Naive thymus-derived CD8-positive, alpha-beta T cell (primary cell): ENCODE measurements at regions of chr2 and their contacts with region 1.

Region 1: DNA sequence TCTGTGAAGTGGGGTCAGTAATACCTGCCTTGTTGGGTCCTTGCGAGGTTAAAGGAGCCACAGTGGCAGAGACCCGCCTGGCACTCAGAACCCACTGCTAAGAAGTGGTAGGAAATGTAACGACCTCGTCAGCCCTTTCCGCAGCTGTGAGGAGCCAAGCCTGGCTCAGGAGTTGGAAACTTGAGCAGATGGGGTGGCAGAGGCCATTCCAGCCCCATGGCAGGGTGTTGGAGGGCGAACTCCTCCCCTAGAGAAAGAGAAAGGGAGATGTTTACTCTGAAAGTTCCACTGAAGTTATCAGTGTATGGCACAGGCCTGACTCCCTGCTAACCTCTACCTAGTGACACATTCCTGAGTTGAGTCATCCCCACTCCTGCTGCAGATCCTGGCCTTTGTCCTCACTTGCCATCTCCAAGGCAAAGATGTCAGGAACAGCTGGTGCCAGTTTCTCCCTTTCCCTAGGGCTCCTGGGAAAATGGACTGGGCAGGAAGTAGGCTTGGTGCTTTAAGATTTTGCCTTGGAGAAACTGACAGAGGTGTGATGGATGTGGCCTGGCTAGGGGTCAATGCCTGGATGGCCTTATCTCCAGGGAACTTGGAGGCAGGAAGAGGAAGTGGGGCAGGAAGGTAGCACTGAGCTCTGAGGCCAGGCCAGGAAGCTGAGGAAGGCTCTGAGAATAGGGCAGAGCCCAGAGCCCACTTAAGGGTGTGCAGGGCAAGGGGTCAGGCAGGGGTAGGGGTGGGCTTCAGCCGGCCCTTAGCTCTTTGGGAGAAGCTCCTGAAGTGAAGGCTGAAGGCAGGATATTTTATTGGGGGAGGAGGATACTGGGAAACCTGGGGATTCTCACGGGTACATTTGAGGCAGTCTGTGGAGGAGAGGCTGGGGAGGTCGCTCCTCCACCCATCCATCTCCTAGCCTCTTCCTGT is 889 bp downstream of the VAMP5 start:
- DNase-seq: peak in 3 of 10 donors; percentile 20 to 42 (median 40)
- ATAC-seq: peak; percentile 55 to 59
- H3K4me3 Mint-ChIP-seq: peak overlapping the region; percentile 80 to 93 (median 89)
- H3K27ac Mint-ChIP-seq: peak overlapping the region; percentile 86 to 97 (median 93)
- H3K4me1 Mint-ChIP-seq: peaks cover 34 to 76% (median 65%) of the 10 kb centered on the region in 4 donors
- H3K27me3 Mint-ChIP-seq: no peaks in the 10 kb centered on the region

Region 2: DNA sequence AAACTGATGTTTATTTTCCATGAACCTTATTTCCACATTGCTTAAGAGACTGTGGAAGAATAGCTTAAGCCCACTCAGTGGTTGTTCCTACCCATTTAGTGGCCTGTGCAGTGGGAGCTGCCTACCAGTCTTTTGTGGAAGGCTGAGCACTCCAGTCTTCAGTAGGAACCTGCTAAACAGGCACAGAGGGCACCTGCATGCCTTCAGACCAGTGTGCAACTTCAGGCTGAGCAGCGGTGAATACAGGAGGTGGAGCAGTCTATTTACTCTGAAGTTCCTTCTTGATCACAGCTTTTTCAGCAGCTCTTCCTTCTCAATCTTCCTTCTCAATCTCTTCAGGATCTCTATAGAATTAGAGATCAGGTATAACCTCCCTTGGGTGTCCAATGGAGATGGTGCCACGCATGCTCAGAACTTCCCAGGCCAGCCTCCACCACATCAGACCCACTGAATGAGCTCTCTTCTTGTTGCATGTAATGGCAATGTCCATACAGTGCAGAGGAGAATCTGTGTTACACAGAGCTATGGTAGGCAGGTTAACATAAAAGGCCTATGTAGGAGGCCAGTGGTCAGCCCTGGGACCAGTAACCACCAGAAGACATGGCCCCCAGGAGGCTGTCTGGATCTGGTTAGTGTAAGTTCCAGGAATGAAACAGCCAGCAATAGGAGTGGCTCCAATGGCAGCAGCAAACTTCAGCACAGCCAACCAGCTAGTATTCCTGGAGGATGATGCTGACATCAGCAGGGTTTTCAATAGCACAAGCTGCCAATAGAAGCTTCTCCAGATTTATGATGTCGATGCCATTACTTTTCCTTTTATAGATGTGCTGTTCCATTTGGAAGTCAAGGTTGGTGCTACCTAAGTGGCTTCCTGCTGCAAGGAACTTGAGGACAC is 94.0 kb before region 1 on chr2:
- POLR2A ChIA-PET with region 1: no interaction called
- DNase-seq: no peak
- ATAC-seq: no peak
- H3K4me3 Mint-ChIP-seq: no peak overlapping the region
- H3K27ac Mint-ChIP-seq: no peak overlapping the region
- H3K4me1 Mint-ChIP-seq: no peaks in the 10 kb centered on the region
- H3K27me3 Mint-ChIP-seq: no peaks in the 10 kb centered on the region

Region 3: DNA sequence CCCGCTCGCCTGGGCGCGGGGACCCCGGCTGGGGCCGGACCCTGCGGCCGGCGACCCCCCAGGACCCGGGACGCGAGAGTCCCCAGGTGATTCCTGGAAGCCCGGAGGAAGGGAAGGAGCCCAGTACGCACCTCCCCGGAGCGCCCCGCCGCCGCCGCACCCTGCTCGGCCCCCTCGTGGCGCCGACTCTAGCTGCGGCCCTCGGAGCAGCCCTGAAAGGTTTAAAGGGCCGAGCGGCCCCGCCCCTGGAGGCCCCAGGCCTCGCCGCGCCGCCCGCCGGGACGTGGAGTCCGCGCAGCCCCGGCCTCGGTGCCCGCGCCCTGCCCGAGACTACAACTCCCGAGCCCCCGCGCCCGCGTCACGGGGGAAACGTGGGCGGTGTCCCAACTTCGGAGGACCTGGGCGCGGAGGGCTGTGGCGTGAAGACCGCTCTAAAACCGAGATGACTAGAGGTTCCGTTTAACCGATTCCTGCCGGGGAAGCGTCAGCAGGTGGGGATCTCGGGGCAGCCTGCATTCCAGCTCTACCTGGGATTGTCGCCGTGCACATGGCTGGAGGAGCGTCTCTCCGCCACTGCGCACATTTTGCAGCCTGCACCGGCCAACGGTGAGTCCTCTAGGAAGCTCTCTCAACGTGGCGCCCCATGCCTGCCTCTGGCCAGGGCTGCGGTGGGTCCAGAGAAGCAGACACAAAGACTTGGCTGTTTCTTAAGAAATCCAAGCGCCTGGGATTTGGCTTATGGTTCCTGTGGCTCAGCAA is 17.5 kb after region 1 on chr2 and contains the start of gene TMEM150A:
- POLR2A ChIA-PET with region 1: interaction called, 88 read pairs
- DNase-seq: peak; percentile 76 to 91 (median 82)
- ATAC-seq: peak; percentile 91 to 92
- H3K4me3 Mint-ChIP-seq: peak within 1 kb of the TSS; percentile 85 to 95 (median 90)
- H3K27ac Mint-ChIP-seq: peak within 1 kb of the TSS; percentile 63 to 94 (median 90)
- H3K4me1 Mint-ChIP-seq: peaks cover 18 to 47% (median 34%) of the 10 kb centered on the region in 4 donors
- H3K27me3 Mint-ChIP-seq: no peaks in the 10 kb centered on the region
- polyA plus RNA-seq, gene TMEM150A: 11.6 to 15.1 (median 13.8) TPM

Region 4: DNA sequence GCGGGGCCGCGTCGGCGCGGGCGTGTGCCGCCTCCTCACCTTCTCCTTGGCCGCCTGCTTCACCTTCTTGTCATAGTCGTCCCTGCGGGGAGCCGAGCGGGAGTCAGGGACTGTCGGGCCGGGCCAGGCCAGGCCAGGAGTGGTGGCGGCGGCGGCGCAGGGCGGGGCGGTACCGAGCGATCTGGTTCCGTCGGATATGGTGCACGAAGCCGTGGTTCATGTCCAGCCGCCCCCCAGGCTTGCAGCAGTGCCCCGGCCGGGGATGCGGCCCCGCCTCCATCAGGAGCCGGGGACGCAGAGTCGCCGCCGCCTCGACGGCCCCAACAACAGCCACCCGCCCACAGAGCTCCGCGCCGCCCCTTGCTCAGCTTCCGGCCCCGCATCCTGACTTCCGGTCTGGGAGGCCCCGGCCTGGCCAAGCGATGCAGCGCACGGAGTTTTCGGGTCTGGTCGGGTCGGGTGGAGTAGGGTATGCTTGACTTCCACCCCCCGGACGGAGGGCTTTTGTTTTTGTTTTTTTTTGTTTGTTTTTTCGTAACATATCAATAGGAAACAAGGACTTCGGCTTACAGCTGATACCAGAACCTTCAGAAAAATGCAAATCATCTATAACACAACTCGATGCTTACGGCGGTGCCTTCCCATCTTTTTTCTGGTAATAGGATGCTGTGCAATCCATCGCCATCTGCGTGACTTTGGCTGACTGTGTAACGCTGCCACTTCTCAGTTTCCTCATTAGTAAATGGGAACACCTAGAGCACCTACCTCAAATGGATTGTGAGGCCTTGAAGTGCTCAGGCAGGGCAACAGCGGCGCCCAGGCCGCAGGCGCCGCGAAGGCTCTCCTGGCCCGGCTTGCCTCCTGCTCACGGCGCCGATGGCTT is 26.8 kb after region 1 on chr2 and contains the start of gene C2orf68:
- POLR2A ChIA-PET with region 1: interaction called, 11 read pairs
- DNase-seq: peak; percentile 65 to 89 (median 77)
- ATAC-seq: peak; percentile 60 to 63
- H3K4me3 Mint-ChIP-seq: peak within 1 kb of the TSS; percentile 91 to 99 (median 98)
- H3K27ac Mint-ChIP-seq: peak within 1 kb of the TSS; percentile 72 to 98 (median 95)
- H3K4me1 Mint-ChIP-seq: peaks cover 12 to 42% (median 32%) of the 10 kb centered on the region in 4 donors
- H3K27me3 Mint-ChIP-seq: no peaks in the 10 kb centered on the region
- polyA plus RNA-seq, gene C2orf68: 15.7 to 21.1 (median 20.4) TPM

Region 5: DNA sequence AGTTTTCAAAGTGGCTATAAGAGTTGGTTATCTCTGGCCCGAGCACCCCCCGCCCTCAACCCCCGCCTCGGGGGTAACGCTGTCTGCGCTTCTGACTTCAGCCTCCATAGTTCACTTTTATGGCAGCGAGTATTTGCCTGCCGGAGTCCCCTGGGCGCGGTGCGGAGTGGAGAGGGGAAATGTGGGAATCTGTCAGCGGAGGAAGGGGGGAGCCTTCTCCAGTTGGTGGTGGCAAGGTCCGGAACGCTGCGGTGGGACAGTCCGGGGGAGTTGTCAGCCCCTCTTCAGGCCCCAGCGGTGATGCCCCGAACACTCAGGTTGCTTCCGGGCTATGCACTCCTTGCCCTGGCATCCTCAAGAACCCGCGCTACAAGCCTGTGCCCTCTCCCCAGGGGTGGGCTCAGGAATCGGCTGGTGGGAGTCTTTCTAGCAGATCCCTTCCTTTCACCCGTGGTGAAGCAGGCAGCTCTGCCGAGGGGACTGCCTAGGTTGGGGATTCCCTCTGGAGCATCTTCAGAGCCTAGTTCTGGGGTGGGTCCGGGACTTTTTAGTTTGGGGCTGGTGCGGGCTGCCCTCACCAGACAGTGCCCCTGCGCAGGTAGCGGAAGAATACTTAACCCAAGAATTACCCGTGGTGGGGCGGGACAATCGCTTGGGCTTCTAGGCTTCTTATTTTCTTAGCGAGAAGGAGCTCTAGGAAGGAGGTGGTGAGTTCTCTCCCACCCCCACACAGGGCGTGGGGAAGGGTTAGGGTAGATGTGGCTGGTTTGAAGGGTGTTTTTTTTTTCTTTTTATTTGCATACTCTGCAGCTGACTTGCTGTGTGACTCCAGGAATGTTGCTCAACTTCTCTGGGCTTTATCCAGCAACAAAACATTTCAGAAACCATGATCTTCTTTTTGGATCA is 170.3 kb after region 1 on chr2:
- POLR2A ChIA-PET with region 1: no interaction called
- DNase-seq: peak in 2 of 10 donors; percentile 4 to 11
- ATAC-seq: peak; percentile 37 to 48
- H3K4me3 Mint-ChIP-seq: peak overlapping the region; percentile 72 to 88 (median 82)
- H3K27ac Mint-ChIP-seq: peak overlapping the region in 3 of 10 donors; percentile 22 to 80 (median 53)
- H3K4me1 Mint-ChIP-seq: peaks cover 13 to 25% (median 19%) of the 10 kb centered on the region in 4 donors
- H3K27me3 Mint-ChIP-seq: peaks cover 34 to 86% (median 50%) of the 10 kb centered on the region in 5 donors